K562 (cell line): ENCODE measurements at regions of chr4 and their contacts with region 1.

Region 1: GRCh38 chr4:70651864-70652506 is 14.3 kb downstream of the JCHAIN start:
- DNase-seq: peak in 2 of 4 experiments; percentile 24 to 41
- ATAC-seq: peak; percentile 79
- H3K4me3 ChIP-seq: no peak overlapping the region
- H3K27ac ChIP-seq: no peak overlapping the region
- H3K4me1 ChIP-seq: peaks cover 0 to 7% of the 10 kb centered on the region in 2 experiments; a peak in 1 of 5 replicates
- H3K27me3 ChIP-seq: no peaks in the 10 kb centered on the region
- CTCF ChIP-seq: peak; percentile 46 to 65 (median 52); a peak in 4 of 6 replicates
- EP300 ChIP-seq: no peak
- POLR2A ChIP-seq: no peak
- RAD21 ChIP-seq: peak; percentile 74 to 75

Region 2: DNA sequence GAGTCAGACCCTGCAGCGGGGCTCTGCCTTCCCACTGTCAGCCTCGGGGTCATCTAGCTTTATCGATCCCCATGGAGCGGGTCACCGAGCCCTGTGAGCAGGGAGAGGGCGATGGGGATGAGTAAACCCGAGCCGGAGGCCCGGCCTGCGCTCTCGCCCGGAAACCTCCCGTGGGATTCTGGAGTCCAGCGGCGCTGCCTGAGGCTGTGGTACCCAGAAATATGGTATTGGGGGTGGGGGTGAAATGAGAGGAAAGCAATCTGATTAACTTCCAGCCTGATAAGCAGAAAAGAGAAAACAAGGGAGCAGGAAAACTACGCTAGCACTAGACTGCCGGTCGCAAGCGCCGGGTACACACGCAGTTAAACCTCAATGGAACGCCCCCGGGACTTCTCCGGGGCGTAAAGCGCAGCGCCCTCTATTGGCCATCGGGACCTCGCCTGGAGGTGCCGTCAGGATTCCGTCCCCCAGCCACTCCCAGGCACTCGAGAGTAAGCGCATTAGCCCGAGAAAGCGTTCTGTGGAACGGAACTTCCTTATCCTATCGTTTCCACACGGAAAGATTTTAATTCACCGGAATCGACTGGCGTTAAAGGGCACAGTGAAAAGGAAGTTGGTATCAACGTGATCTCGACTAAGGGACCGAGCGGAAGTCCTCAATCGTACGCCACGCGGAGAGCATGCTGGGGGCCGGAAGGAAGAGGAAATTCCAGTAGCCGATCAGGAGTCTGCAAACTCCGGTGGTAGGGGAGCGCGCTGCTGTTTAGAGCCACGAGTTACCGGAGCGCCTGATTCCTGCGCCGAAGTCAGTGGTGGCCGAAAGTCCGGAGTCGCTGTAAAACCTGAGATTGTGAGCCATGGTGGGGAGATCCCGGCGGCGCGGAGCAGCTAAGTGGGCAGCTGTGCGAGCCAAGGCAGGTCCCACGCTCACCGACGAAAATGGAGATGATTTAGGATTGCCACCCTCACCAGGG is 36.1 kb after region 1 on chr4 and contains the start of gene UTP3:
- CTCF ChIA-PET with region 1: no interaction called
- POLR2A ChIA-PET with region 1: no interaction called
- in situ Hi-C with region 1: no loop called
- intact Hi-C with region 1: loop called (anchors 5 kb)
- DNase-seq: peak; percentile 81 to 97 (median 87)
- ATAC-seq: peak; percentile 96
- H3K4me3 ChIP-seq: peak within 1 kb of the TSS; percentile 76
- H3K27ac ChIP-seq: peak within 1 kb of the TSS; percentile 82
- H3K4me1 ChIP-seq: peaks cover 7 to 12% of the 10 kb centered on the region in 2 experiments
- H3K27me3 ChIP-seq: no peaks in the 10 kb centered on the region
- CTCF ChIP-seq: peak; percentile 94 to 99 (median 97)
- EP300 ChIP-seq: peak; percentile 65
- POLR2A ChIP-seq: peak; percentile 95
- RAD21 ChIP-seq: peak; percentile 68 to 72
- polyA plus RNA-seq, gene UTP3: 11.9 to 12.4 TPM

Region 3: GRCh38 chr4:71009890-71010588 is 358.1 kb after region 1 on chr4:
- CTCF ChIA-PET with region 1: interaction called, 4 read pairs
- POLR2A ChIA-PET with region 1: no interaction called
- in situ Hi-C with region 1: no loop called
- intact Hi-C with region 1: loop called (anchors 5 kb)
- DNase-seq: peak; percentile 46 to 62 (median 52)
- ATAC-seq: peak; percentile 91
- H3K4me3 ChIP-seq: no peak overlapping the region
- H3K27ac ChIP-seq: no peak overlapping the region
- H3K4me1 ChIP-seq: peaks cover 0 to 4% of the 10 kb centered on the region in 2 experiments; a peak in 1 of 5 replicates
- H3K27me3 ChIP-seq: no peaks in the 10 kb centered on the region
- CTCF ChIP-seq: peak; percentile 37 to 71 (median 66); a peak in 5 of 6 replicates
- EP300 ChIP-seq: no peak
- POLR2A ChIP-seq: no peak
- RAD21 ChIP-seq: peak; percentile 30 to 45

Region 4: GRCh38 chr4:71113294-71113693 is 461.3 kb after region 1 on chr4:
- CTCF ChIA-PET with region 1: no interaction called
- POLR2A ChIA-PET with region 1: no interaction called
- in situ Hi-C with region 1: no loop called
- intact Hi-C with region 1: loop called (anchors 5 kb)
- DNase-seq: peak in 2 of 4 experiments; percentile 22
- ATAC-seq: peak; percentile 75
- H3K4me3 ChIP-seq: no peak overlapping the region
- H3K27ac ChIP-seq: no peak overlapping the region
- H3K4me1 ChIP-seq: no peaks in the 10 kb centered on the region
- H3K27me3 ChIP-seq: no peaks in the 10 kb centered on the region
- CTCF ChIP-seq: peak; percentile 39 to 48 (median 47); a peak in 4 of 6 replicates
- EP300 ChIP-seq: no peak
- POLR2A ChIP-seq: no peak
- RAD21 ChIP-seq: peak in 1 of 2 experiments; percentile 28; a peak in 1 of 4 replicates